CD14-positive monocyte (primary cell): ENCODE measurements at regions of chr1 and their contacts with region 1.

Region 1: DNA sequence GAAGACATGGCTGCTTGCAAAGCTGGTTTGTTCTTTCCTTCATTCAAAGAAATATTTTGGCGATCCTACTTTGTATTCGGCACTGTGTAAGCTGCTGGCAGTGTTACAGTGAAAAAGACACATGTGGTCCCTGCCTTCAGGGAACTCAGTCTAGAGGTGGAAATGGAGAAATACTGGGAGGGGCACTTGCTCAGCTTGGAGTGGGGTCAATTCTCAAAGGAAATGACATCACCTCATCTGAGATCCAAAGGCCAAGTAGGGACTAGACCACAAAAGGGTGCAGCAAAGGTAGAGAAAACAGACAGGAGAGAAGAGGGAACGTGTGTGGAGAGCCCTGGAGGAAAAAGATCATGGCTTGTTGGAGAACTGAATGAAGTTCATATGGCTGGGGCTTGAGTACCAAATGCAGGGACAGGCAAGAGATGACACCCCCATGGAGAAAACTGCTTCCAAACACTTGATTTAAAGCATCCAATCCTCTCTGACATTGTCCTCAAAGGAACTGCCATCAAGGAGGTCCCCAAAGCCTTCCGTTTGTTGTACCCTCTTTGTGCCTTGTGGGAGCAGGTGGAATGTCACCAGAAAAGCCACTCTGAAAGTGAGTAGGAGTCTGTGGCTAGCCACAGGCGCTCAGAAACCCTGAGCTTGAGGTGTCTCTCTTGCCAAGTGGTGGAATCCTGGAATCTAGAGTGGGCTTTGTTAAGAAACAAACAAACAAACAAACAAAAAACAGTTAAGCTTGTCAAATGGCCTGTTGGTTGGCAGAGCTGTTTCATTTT is 48.3 kb upstream of the TDRD10 start:
- DNase-seq: peak; percentile 58 to 73 (median 69)
- H3K4me3 ChIP-seq: peak overlapping the region in 1 of 3 experiments; percentile 46
- H3K4me3 Mint-ChIP-seq: peak overlapping the region; percentile 65 to 78
- H3K27ac ChIP-seq: peak overlapping the region; percentile 87 to 91
- H3K27ac Mint-ChIP-seq: peak overlapping the region; percentile 95 to 99 (median 98)
- H3K4me1 ChIP-seq: peaks cover 58 to 64% of the 10 kb centered on the region in 2 donors
- H3K4me1 Mint-ChIP-seq: peaks cover 56% of the 10 kb centered on the region
- H3K27me3 ChIP-seq: no peaks in the 10 kb centered on the region
- H3K27me3 Mint-ChIP-seq: peaks cover 0 to 2% (median 0%) of the 10 kb centered on the region in 3 donors
- CTCF ChIP-seq: no peak

Region 2: DNA sequence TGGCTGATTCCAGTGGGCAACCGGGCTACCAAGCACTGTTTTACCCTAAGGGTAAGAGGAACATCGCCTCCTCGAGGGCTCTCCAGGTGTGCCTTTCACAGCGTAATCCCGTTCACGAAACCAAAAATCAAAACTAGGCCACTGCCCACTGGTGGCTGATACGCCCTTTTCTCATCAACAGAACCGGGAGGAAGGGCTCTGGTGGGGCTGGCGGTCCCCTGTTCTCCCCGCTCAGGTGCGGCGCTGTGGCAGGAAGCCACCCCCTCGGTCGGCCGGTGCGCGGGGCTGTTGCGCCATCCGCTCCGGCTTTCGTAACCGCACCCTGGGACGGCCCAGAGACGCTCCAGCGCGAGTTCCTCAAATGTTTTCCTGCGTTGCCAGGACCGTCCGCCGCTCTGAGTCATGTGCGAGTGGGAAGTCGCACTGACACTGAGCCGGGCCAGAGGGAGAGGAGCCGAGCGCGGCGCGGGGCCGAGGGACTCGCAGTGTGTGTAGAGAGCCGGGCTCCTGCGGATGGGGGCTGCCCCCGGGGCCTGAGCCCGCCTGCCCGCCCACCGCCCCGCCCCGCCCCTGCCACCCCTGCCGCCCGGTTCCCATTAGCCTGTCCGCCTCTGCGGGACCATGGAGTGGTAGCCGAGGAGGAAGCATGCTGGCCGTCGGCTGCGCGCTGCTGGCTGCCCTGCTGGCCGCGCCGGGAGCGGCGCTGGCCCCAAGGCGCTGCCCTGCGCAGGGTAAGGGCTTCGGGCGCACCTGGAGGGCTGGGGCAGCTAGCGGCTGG is 48.6 kb before region 1 on chr1 and contains the start of gene IL6R:
- intact Hi-C with region 1: loop called (anchors 2 to 5 kb)
- DNase-seq: peak; percentile 98 to 99 (median 99)
- H3K4me3 ChIP-seq: peak within 1 kb of the TSS; percentile 90 to 95 (median 94)
- H3K4me3 Mint-ChIP-seq: peak within 1 kb of the TSS; percentile 98
- H3K27ac ChIP-seq: peak within 1 kb of the TSS; percentile 97 to 100
- H3K27ac Mint-ChIP-seq: peak within 1 kb of the TSS; percentile 99 to 100 (median 99)
- H3K4me1 ChIP-seq: peaks cover 82 to 89% of the 10 kb centered on the region in 2 donors
- H3K4me1 Mint-ChIP-seq: peaks cover 80% of the 10 kb centered on the region
- H3K27me3 ChIP-seq: no peaks in the 10 kb centered on the region
- H3K27me3 Mint-ChIP-seq: peaks cover 0 to 2% (median 0%) of the 10 kb centered on the region in 3 donors
- CTCF ChIP-seq: no peak
- polyA plus RNA-seq, gene IL6R: 56.4 to 81.7 (median 62.1) TPM

Region 3: DNA sequence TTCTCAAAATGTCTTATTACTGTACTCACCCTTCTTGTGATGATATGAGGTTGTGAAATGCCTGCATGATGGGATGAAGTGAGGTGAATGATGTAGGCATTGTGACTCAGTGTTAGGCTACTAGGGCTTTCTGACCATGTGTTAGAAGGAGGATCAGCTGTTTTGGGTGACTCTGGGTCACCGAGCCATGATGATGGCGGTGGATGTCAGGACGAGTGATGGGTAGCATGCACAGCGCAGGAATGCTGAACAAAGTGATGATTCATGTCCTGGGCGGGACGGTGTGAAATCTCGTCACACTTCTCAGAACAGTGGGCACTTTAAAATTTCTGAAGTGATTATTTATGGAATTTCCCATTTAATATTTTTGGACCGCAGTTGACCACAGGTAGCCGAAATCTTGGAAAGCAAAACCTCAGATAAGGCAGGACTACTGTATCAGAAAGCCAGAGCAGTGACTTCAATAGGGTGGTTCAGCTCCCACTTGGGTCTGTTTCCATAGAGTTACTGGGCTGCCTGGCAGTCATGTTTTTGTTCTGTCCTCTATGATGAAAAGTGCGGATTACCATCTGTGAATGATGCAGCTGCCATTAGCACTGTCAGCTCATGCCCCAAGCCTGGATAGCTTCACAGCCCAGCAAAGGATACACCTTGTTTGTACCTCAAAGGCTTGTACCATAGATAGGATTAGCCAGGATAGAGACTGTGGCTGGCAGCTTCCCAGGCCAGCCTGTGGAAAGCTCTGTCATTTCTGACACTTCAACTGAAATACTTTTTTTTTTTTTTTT is 22.0 kb before region 1 on chr1:
- intact Hi-C with region 1: loop called in 1 of 2 experiments (anchors 2 kb)
- DNase-seq: peak; percentile 97 to 100 (median 99)
- H3K4me3 ChIP-seq: peak overlapping the region in 1 of 3 experiments; percentile 10
- H3K4me3 Mint-ChIP-seq: peak overlapping the region in 1 of 2 donors; percentile 54
- H3K27ac ChIP-seq: peak overlapping the region; percentile 98 to 99
- H3K27ac Mint-ChIP-seq: peak overlapping the region; percentile 95 to 99 (median 98)
- H3K4me1 ChIP-seq: peaks cover 44 to 57% of the 10 kb centered on the region in 2 donors
- H3K4me1 Mint-ChIP-seq: peaks cover 57% of the 10 kb centered on the region
- H3K27me3 ChIP-seq: no peaks in the 10 kb centered on the region
- H3K27me3 Mint-ChIP-seq: peaks cover 0 to 3% (median 0%) of the 10 kb centered on the region in 3 donors
- CTCF ChIP-seq: no peak

Region 4: GRCh38 chr1:154442006-154442740 is 11.6 kb before region 1 on chr1:
- intact Hi-C with region 1: loop called in 1 of 2 experiments (anchors 2 kb)
- DNase-seq: no peak
- H3K4me3 ChIP-seq: no peak overlapping the region
- H3K4me3 Mint-ChIP-seq: no peak overlapping the region
- H3K27ac ChIP-seq: peak overlapping the region; percentile 11 to 90
- H3K27ac Mint-ChIP-seq: peak overlapping the region; percentile 3 to 99 (median 68)
- H3K4me1 ChIP-seq: peaks cover 29 to 41% of the 10 kb centered on the region in 2 donors
- H3K4me1 Mint-ChIP-seq: peaks cover 42% of the 10 kb centered on the region
- H3K27me3 ChIP-seq: no peaks in the 10 kb centered on the region
- H3K27me3 Mint-ChIP-seq: peaks cover 0 to 4% (median 0%) of the 10 kb centered on the region in 3 donors
- CTCF ChIP-seq: peak; percentile 21

Region 5: DNA sequence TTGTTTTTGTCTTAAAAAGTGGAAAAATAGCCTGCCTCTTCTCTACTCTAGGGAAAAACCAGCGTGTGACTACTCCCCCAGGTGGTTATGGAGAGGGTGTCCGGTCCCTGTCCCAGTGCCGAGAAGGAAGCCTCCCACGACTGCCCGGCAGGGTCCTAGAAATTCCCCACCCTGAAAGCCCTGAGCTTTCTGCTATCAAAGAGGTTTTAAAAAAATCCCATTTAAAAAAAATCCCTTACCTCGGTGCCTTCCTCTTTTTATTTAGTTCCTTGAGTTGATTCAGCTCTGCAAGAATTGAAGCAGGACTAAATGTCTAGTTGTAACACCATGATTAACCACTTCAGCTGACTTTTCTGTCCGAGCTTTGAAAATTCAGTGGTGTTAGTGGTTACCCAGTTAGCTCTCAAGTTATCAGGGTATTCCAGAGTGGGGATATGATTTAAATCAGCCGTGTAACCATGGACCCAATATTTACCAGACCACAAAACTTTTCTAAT is 13.2 kb after region 1 on chr1:
- intact Hi-C with region 1: loop called in 1 of 2 experiments (anchors 2 kb)
- DNase-seq: peak in 1 of 3 donors; percentile 37
- H3K4me3 ChIP-seq: no peak overlapping the region
- H3K4me3 Mint-ChIP-seq: no peak overlapping the region
- H3K27ac ChIP-seq: peak overlapping the region; percentile 51 to 76
- H3K27ac Mint-ChIP-seq: peak overlapping the region in 6 of 7 donors; percentile 68 to 91 (median 86)
- H3K4me1 ChIP-seq: peaks cover 33 to 39% of the 10 kb centered on the region in 2 donors
- H3K4me1 Mint-ChIP-seq: peaks cover 44% of the 10 kb centered on the region
- H3K27me3 ChIP-seq: no peaks in the 10 kb centered on the region
- H3K27me3 Mint-ChIP-seq: no peaks in the 10 kb centered on the region
- CTCF ChIP-seq: no peak

Region 6: GRCh38 chr1:154502066-154502743 is 48.4 kb after region 1 on chr1 and contains the starts of genes SHE and TDRD10:
- intact Hi-C with region 1: no loop called
- DNase-seq: no peak
- H3K4me3 ChIP-seq: peak within 1 kb of the TSS in 2 of 3 experiments; percentile 36 to 69
- H3K4me3 Mint-ChIP-seq: peak within 1 kb of the TSS; percentile 73 to 87
- H3K27ac ChIP-seq: no peak within 1 kb of the TSS
- H3K27ac Mint-ChIP-seq: no peak within 1 kb of the TSS
- H3K4me1 ChIP-seq: peaks cover 12 to 18% of the 10 kb centered on the region in 2 donors
- H3K4me1 Mint-ChIP-seq: peaks cover 11% of the 10 kb centered on the region
- H3K27me3 ChIP-seq: peaks cover 55 to 72% of the 10 kb centered on the region in 2 donors
- H3K27me3 Mint-ChIP-seq: peaks cover 55 to 85% (median 56%) of the 10 kb centered on the region in 3 donors
- CTCF ChIP-seq: no peak
- polyA plus RNA-seq, gene SHE: not detected
- polyA plus RNA-seq, gene TDRD10: not detected